CD8-positive, alpha-beta T cell (primary cell): ENCODE measurements at regions of chr16 and their contacts with region 1.

Region 1: DNA sequence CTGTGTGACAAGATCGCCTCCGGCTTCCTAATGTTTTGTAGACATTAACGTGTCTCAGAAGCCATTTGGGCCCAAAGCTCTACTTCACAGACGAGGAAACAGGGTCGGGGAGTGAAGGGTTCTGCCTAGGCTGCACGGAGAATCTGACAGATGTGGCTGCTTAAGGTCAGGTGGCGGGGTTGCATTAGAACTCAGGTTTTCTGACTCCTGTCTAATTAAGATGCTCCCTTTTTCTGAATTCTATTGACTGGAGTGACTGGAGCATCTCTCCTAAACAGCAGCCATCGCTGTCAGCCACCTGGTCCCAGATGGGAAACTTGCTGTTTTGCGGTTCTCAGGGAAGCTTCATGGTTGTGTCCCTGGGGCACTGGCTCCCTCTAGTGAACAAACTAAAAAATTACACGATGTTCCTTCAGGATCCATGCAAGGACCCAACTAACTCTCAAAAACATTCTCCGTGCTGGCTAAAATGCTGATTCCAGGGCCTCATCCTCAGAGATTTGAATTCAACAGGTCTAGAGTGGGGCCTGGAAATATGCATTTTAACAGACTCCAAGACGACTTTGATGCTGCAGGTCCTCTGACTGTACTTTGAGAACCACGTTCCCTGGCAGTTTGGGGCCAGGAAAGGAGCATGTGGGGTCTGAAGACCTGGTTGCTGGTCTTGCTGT is 117.4 kb downstream of the IRF8 start:
- DNase-seq: peak in 7 of 9 experiments; percentile 16 to 73 (median 26)
- ATAC-seq: no peak
- H3K4me3 ChIP-seq: no peak overlapping the region
- H3K4me3 Mint-ChIP-seq: no peak overlapping the region
- H3K27ac ChIP-seq: no peak overlapping the region
- H3K27ac Mint-ChIP-seq: no peak overlapping the region
- H3K4me1 ChIP-seq: no peaks in the 10 kb centered on the region
- H3K4me1 Mint-ChIP-seq: peaks cover 2% of the 10 kb centered on the region
- H3K27me3 ChIP-seq: peaks cover 0 to 5% of the 10 kb centered on the region in 2 experiments
- H3K27me3 Mint-ChIP-seq: peaks cover 28% of the 10 kb centered on the region
- CTCF ChIP-seq: peak; percentile 68

Region 2: GRCh38 chr16:85767569-85767968 is 248.8 kb before region 1 on chr16:
- CTCF ChIA-PET with region 1: no interaction called
- POLR2A ChIA-PET with region 1: no interaction called
- intact Hi-C with region 1: no loop called
- DNase-seq: no peak
- ATAC-seq: no peak
- H3K4me3 ChIP-seq: no peak overlapping the region
- H3K4me3 Mint-ChIP-seq: no peak overlapping the region
- H3K27ac ChIP-seq: no peak overlapping the region
- H3K27ac Mint-ChIP-seq: no peak overlapping the region
- H3K4me1 ChIP-seq: no peaks in the 10 kb centered on the region
- H3K4me1 Mint-ChIP-seq: no peaks in the 10 kb centered on the region
- H3K27me3 ChIP-seq: no peaks in the 10 kb centered on the region
- H3K27me3 Mint-ChIP-seq: no peaks in the 10 kb centered on the region
- CTCF ChIP-seq: no peak

Region 3: GRCh38 chr16:85812031-85812793 is 204.1 kb before region 1 on chr16:
- CTCF ChIA-PET with region 1: interaction called, 15 read pairs
- POLR2A ChIA-PET with region 1: no interaction called
- intact Hi-C with region 1: no loop called
- DNase-seq: no peak
- ATAC-seq: no peak
- H3K4me3 ChIP-seq: no peak overlapping the region
- H3K4me3 Mint-ChIP-seq: no peak overlapping the region
- H3K27ac ChIP-seq: no peak overlapping the region
- H3K27ac Mint-ChIP-seq: no peak overlapping the region
- H3K4me1 ChIP-seq: no peaks in the 10 kb centered on the region
- H3K4me1 Mint-ChIP-seq: no peaks in the 10 kb centered on the region
- H3K27me3 ChIP-seq: no peaks in the 10 kb centered on the region
- H3K27me3 Mint-ChIP-seq: peaks cover 12% of the 10 kb centered on the region
- CTCF ChIP-seq: no peak

Region 4: DNA sequence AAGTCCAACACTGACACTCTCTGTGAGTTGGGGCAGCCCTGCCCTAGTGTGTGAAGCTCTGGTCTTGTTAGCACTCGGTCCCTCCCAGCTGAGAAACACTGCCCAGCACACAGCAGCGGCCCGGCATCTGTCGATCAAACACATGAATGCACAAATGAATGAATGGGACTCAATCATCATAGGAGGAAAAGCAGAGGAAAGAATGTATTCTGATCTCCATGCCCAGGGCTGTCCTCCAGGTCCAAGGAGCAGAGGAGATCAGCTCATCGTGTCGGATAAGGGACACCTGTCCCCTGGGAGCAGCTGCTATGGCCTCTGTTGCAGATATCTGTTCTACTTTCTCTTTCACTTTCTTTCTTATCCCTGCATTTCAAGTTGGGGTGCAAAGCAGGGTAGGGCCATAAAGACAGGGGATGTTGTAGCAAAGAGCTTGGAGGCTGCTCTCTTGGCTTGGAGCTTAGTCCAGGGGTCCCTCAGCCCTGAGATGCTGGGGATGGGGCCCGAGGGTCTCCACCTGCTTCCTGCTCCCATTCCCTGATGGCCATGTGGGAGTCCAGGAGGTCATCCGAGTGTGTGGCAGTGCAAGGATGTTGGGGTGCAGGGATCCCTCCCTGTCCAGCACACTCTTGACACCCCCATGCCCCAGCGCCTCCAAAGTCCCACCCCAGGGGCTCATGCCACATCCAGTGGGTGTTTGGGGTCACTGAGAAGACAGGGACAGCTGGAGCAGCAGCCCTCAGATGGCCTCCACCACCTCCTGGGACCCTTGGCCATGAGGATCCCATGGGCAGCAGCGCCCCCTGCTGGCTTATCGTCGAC is 29.2 kb before region 1 on chr16:
- CTCF ChIA-PET with region 1: interaction called, 10 read pairs
- POLR2A ChIA-PET with region 1: no interaction called
- intact Hi-C with region 1: loop called in 1 of 2 experiments (anchors 1 kb)
- DNase-seq: peak in 8 of 9 experiments; percentile 9 to 72 (median 43)
- ATAC-seq: no peak
- H3K4me3 ChIP-seq: no peak overlapping the region
- H3K4me3 Mint-ChIP-seq: no peak overlapping the region
- H3K27ac ChIP-seq: no peak overlapping the region
- H3K27ac Mint-ChIP-seq: no peak overlapping the region
- H3K4me1 ChIP-seq: no peaks in the 10 kb centered on the region
- H3K4me1 Mint-ChIP-seq: peaks cover 20% of the 10 kb centered on the region
- H3K27me3 ChIP-seq: no peaks in the 10 kb centered on the region
- H3K27me3 Mint-ChIP-seq: peaks cover 12% of the 10 kb centered on the region
- CTCF ChIP-seq: peak; percentile 66

Region 5: DNA sequence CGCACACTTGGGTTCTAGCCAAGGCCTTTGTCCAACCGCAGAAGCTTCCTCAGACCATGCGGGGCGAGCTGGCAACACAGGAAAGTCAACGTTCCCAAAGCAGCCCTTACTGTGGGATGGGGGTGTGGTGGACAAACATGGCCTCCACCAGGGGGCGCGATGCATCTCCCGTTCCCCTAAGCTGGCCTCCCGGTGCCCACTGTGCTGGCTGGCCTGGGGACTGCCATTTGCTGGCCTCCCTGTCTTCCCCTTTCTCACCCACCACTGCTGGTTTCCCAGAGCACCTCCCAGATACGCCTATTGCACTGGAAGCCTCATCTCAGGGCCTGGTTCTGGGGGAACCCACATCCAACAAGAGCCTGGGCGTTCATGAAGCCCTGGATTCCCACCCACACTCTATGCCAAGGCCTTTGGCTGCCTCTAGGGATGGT is 27.9 kb after region 1 on chr16:
- CTCF ChIA-PET with region 1: no interaction called
- POLR2A ChIA-PET with region 1: no interaction called
- intact Hi-C with region 1: no loop called
- DNase-seq: peak in 8 of 9 experiments; percentile 9 to 59 (median 44)
- ATAC-seq: no peak
- H3K4me3 ChIP-seq: no peak overlapping the region
- H3K4me3 Mint-ChIP-seq: no peak overlapping the region
- H3K27ac ChIP-seq: no peak overlapping the region
- H3K27ac Mint-ChIP-seq: no peak overlapping the region
- H3K4me1 ChIP-seq: peaks cover 28% of the 10 kb centered on the region
- H3K4me1 Mint-ChIP-seq: peaks cover 21% of the 10 kb centered on the region
- H3K27me3 ChIP-seq: peaks cover 0 to 8% of the 10 kb centered on the region in 2 experiments
- H3K27me3 Mint-ChIP-seq: peaks cover 32% of the 10 kb centered on the region
- CTCF ChIP-seq: peak; percentile 38

Region 6: DNA sequence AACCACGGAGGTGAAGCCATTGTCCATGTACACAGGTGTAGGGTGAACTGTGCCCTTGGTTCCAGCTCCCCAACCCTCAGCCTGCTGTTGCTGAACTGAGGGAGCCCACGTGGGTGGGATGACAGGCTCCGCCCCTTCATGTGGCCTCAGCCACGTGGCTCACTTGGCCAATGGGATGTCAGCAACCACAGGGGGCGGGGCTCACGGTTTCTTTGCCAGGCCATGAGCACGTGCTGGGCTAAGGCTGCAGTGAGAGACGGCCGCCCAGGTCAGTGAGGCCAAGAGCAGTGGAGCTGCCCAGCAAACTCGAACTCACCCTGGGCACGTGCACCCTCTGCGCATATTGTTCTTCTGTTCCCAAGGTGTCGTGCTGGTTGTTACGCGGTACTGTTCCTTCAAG is 165.2 kb after region 1 on chr16:
- CTCF ChIA-PET with region 1: no interaction called
- POLR2A ChIA-PET with region 1: no interaction called
- intact Hi-C with region 1: no loop called
- DNase-seq: no peak
- ATAC-seq: no peak
- H3K4me3 ChIP-seq: no peak overlapping the region
- H3K4me3 Mint-ChIP-seq: no peak overlapping the region
- H3K27ac ChIP-seq: no peak overlapping the region
- H3K27ac Mint-ChIP-seq: no peak overlapping the region
- H3K4me1 ChIP-seq: no peaks in the 10 kb centered on the region
- H3K4me1 Mint-ChIP-seq: no peaks in the 10 kb centered on the region
- H3K27me3 ChIP-seq: no peaks in the 10 kb centered on the region
- H3K27me3 Mint-ChIP-seq: no peaks in the 10 kb centered on the region
- CTCF ChIP-seq: no peak